ENCODE measurements at regions of chr10 and their contacts with region 1.

Region 1: GRCh38 chr10:54607983-54608382 is 193.0 kb downstream of the PCDH15 start:
- DNase-seq: no peak
- H3K4me3 ChIP-seq: no peak overlapping the region
- H3K27ac ChIP-seq: no peak overlapping the region
- H3K4me1 ChIP-seq: peaks cover 15% of the 10 kb centered on the region
- H3K27me3 ChIP-seq: no peaks in the 10 kb centered on the region
- CTCF ChIP-seq: no peak
- POLR2A ChIP-seq: no peak

Region 2: GRCh38 chr10:52993109-52993508 is 1614.9 kb before region 1 on chr10:
- CTCF ChIA-PET with region 1: no interaction called
- POLR2A ChIA-PET with region 1: no interaction called
- dilution Hi-C with region 1: no loop called
- intact Hi-C with region 1: loop called (anchors 5 kb)
- DNase-seq: no peak
- H3K4me3 ChIP-seq: no peak overlapping the region
- H3K27ac ChIP-seq: no peak overlapping the region
- H3K4me1 ChIP-seq: no peaks in the 10 kb centered on the region
- H3K27me3 ChIP-seq: no peaks in the 10 kb centered on the region
- CTCF ChIP-seq: no peak
- POLR2A ChIP-seq: no peak

Region 3: DNA sequence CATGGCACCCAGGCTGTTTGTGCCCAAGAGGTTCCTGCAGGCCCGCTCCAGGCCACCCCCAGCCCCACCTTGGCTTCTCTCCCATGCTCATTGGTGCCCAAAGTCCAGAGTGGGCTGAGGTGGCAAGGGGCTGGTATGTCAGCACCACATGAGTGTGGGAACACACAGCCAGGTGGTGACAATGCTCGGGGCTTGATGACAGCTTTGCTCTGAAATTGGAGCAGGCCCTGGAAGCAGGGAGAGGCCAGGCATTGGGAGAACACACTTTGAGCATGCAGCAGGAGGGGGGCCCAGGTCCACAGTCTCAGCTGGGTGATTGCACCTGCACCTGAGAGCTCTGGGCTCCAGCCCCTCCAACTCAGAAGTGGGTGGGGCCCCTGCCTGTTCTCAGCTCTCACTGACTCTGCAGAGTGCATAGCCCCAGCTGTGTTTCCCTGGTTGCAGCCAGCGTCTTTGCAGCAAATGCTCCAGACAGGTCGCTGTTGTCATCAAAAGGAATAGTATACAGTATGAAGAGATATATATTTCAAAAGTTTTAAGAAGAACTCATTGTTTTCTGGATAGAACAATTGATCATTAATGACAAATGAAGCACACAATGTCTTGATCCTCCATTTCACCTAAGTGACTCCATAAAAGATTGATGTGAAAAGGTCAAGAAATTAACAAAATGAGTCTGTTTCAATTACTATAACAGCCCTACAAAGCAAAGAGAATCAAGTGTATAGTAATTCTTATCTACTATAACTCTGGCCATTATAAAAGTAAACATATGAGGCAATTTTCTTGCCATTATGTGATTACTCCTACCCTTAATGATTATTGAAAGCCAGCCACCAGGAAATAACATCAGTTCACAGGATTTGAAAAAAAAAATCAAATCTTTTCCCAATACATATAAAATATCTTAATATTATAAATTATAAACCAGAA is 655.0 kb before region 1 on chr10:
- CTCF ChIA-PET with region 1: no interaction called
- POLR2A ChIA-PET with region 1: no interaction called
- dilution Hi-C with region 1: no loop called
- intact Hi-C with region 1: no loop called
- DNase-seq: no peak
- H3K4me3 ChIP-seq: no peak overlapping the region
- H3K27ac ChIP-seq: no peak overlapping the region
- H3K4me1 ChIP-seq: no peaks in the 10 kb centered on the region
- H3K27me3 ChIP-seq: no peaks in the 10 kb centered on the region
- CTCF ChIP-seq: no peak
- POLR2A ChIP-seq: no peak